Gastrocnemius medialis (tissue), 4 donors: ENCODE measurements at regions of chr6 and their contacts with region 1.

Region 1: DNA sequence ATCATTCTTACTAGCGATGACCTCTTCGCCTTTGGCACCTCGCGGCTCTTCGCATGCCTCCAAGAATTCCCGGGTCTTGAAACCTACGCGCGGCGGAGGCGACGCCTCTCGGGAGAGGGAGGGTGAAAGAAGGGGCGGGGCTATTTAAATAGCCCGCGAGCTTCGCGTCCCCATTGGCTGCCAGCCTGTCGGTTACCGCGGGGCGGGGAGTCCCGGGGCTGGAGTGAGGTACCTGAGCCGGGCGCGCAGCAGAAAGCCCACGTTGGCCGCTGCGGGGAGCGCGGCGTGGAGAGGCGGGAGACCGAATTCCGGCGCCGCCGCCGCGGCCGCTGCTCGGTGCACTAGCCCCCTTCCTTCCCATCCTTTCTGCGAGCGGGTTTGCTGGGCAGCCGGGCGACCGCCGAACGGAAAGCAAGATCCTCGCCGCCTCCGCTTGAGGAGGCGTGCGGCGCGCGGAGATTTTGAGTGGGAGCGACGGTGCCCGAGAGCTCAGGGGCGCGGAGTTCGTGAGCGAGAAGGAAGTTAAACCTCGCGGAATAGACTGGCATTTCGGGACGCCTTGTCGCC is at the start of gene BMP6:
- DNase-seq: peak; percentile 69 to 70
- ATAC-seq: peak; percentile 87 to 89
- H3K4me3 ChIP-seq: peak within 1 kb of the TSS; percentile 57 to 84 (median 68)
- H3K27ac ChIP-seq: no peak within 1 kb of the TSS
- H3K4me1 ChIP-seq: peaks cover 12 to 21% of the 10 kb centered on the region in 2 donors
- H3K27me3 ChIP-seq: peaks cover 34 to 43% (median 36%) of the 10 kb centered on the region in 3 donors
- CTCF ChIP-seq: peak in 1 of 5 experiments; percentile 8
- POLR2A ChIP-seq: peak; percentile 42 to 64
- total RNA-seq, gene BMP6: 1.7 to 8.3 (median 3.3) TPM

Region 2: GRCh38 chr6:7658544-7658943 is 67.4 kb before region 1 on chr6:
- in situ Hi-C with region 1: no loop called
- intact Hi-C with region 1: no loop called
- DNase-seq: no peak
- ATAC-seq: no peak
- H3K4me3 ChIP-seq: no peak overlapping the region
- H3K27ac ChIP-seq: no peak overlapping the region
- H3K4me1 ChIP-seq: no peaks in the 10 kb centered on the region
- H3K27me3 ChIP-seq: no peaks in the 10 kb centered on the region
- CTCF ChIP-seq: no peak
- POLR2A ChIP-seq: no peak

Region 3: GRCh38 chr6:7794509-7794908 is 68.6 kb after region 1 on chr6:
- in situ Hi-C with region 1: no loop called
- intact Hi-C with region 1: no loop called
- DNase-seq: no peak
- ATAC-seq: no peak
- H3K4me3 ChIP-seq: no peak overlapping the region
- H3K27ac ChIP-seq: no peak overlapping the region
- H3K4me1 ChIP-seq: no peaks in the 10 kb centered on the region
- H3K27me3 ChIP-seq: no peaks in the 10 kb centered on the region
- CTCF ChIP-seq: no peak
- POLR2A ChIP-seq: no peak

Region 4: DNA sequence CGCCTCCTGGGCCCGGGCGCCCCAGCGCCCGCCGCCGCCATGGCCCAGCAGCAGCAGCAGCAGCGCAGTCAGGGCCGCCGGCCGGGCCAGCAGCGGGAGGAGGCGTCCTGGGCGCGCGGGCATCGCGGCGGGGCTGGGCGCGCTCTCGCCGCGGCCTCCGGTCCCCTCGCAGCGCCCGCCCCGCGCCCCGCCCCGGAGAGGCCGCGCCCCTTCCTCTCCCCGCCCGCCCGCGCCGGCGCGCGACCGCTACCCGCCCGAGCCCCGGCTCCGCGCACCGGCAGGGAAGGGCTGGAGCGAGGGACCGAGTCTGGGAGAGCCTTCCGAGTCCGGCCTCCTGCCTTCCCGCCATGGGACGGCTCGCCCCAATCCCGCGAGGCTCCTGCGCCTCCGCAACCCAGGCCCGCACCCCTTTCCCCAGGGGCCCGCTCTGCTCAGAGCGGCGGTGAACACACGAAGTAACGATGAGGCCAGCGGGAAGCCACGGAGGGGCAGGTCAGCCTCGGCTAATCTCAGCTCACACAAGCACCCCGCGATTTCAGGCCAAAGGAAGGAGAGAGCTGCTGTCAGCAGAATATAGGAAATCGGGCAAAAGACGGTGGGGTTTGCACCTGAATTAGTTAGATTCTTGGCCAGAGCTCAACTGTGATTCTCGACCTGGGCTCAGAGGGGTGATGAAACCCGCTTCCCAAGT is 184.9 kb after region 1 on chr6 and contains the start of gene TXNDC5:
- in situ Hi-C with region 1: no loop called
- intact Hi-C with region 1: loop called (anchors 5 kb)
- DNase-seq: peak; percentile 52 to 57
- ATAC-seq: peak; percentile 75 to 76
- H3K4me3 ChIP-seq: peak within 1 kb of the TSS; percentile 65 to 92 (median 74)
- H3K27ac ChIP-seq: peak within 1 kb of the TSS; percentile 78 to 86 (median 80)
- H3K4me1 ChIP-seq: peaks cover 17 to 25% of the 10 kb centered on the region in 2 donors
- H3K27me3 ChIP-seq: no peaks in the 10 kb centered on the region
- CTCF ChIP-seq: no peak
- POLR2A ChIP-seq: peak; percentile 37 to 56
- total RNA-seq, gene TXNDC5: 29.9 to 43.3 (median 38.8) TPM

Region 5: GRCh38 chr6:8006208-8006607 is 280.3 kb after region 1 on chr6:
- in situ Hi-C with region 1: loop called (anchors 5 to 25 kb)
- intact Hi-C with region 1: loop called (anchors 5 kb)
- DNase-seq: no peak
- ATAC-seq: no peak
- H3K4me3 ChIP-seq: no peak overlapping the region
- H3K27ac ChIP-seq: no peak overlapping the region
- H3K4me1 ChIP-seq: no peaks in the 10 kb centered on the region
- H3K27me3 ChIP-seq: no peaks in the 10 kb centered on the region
- CTCF ChIP-seq: peak in 3 of 5 experiments; percentile 24 to 41 (median 24)
- POLR2A ChIP-seq: no peak

Region 6: GRCh38 chr6:8219352-8219943 is 493.5 kb after region 1 on chr6:
- in situ Hi-C with region 1: loop called in 1 of 4 experiments (anchors 25 kb)
- intact Hi-C with region 1: loop called (anchors 10 kb)
- DNase-seq: no peak
- ATAC-seq: no peak
- H3K4me3 ChIP-seq: no peak overlapping the region
- H3K27ac ChIP-seq: no peak overlapping the region
- H3K4me1 ChIP-seq: no peaks in the 10 kb centered on the region
- H3K27me3 ChIP-seq: no peaks in the 10 kb centered on the region
- CTCF ChIP-seq: peak; percentile 21 to 67 (median 44)
- POLR2A ChIP-seq: no peak